ENCODE measurements at regions of chr10 and their contacts with region 1.

Region 1: GRCh38 chr10:13371897-13372470 is 23.9 kb upstream of the SEPHS1 start:
- DNase-seq: peak; percentile 56
- H3K4me3 ChIP-seq: no peak overlapping the region
- H3K27ac ChIP-seq: no peak overlapping the region
- H3K27me3 ChIP-seq: peaks cover 6% of the 10 kb centered on the region
- CTCF ChIP-seq: peak; percentile 97

Region 2: GRCh38 chr10:13056456-13057077 is 315.4 kb before region 1 on chr10:
- CTCF ChIA-PET with region 1: no interaction called
- POLR2A ChIA-PET with region 1: no interaction called
- DNase-seq: peak; percentile 4
- H3K4me3 ChIP-seq: no peak overlapping the region
- H3K27ac ChIP-seq: no peak overlapping the region
- H3K27me3 ChIP-seq: peaks cover 5% of the 10 kb centered on the region
- CTCF ChIP-seq: peak; percentile 64

Region 3: DNA sequence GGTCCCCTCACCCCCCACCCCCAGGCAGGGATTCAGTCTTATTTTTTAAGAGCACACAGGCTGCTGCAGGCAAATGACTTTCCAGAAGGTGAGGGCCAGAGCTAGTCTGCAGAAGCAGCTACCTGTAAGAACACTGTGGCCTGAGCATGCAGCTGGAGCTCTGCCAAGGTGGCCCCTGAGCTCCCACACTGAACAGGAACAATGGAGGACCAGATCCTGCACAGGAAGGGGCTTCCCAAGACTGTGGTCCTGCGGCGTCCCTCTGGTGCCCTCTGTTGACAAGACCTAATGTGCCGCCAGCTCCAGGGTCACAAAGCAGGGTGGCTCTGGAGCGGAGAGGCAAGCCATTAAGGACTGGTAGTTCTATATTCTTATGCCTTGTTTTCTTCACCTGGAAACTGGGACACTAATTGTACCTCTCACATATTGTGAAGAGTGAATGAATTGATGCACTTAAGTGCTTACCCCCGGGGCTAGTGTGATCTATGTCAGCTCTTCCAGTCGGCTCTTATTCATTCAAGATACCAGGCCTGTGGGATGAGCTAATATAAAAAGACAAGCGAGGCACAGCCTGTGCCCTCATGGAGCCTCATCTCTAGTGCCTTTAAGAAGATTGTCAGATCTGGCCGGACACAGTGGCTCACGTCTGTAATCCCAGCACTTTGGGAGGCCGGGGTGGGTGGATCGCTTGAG is 164.8 kb after region 1 on chr10:
- CTCF ChIA-PET with region 1: interaction called, 24 read pairs
- POLR2A ChIA-PET with region 1: no interaction called
- DNase-seq: no peak
- H3K4me3 ChIP-seq: no peak overlapping the region
- H3K27ac ChIP-seq: no peak overlapping the region
- H3K27me3 ChIP-seq: peaks cover 23% of the 10 kb centered on the region
- CTCF ChIP-seq: peak; percentile 55

Region 4: DNA sequence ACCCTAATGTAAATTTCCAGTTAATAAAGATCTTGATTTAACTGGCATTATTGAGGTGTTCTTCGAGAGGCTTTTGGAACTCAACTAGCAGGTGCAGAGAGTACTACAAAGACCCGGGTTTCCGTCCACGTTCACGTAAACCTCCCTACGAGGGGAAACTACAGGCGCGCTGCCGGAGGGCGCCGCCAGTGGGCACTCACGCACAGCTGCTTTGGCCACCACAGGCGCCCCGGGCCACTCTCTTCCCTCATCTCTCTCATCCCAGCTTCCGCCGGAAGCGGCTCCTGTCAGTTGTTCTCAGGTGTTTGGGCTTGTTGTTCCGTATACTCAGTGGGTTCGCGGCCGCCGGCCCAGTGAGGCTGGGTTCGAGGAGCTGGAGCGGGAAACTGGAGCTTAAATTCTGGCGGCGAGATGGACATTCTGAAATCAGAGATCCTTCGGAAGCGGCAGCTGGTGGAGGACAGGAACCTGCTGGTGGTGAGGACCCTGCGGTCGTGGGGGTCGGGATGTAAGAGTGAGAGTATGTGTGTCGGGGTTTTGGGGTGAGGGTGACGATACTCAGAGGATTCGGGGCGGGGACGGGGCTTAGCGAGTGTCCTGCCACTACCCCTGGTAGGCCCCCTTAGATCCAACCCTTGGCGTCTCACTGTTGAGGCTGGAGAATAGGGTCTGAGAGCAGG is 214.8 kb after region 1 on chr10 and contains the start of gene PRPF18:
- CTCF ChIA-PET with region 1: interaction called, 14 read pairs
- POLR2A ChIA-PET with region 1: no interaction called
- DNase-seq: peak; percentile 76
- H3K4me3 ChIP-seq: peak within 1 kb of the TSS; percentile 100
- H3K27ac ChIP-seq: no peak within 1 kb of the TSS
- H3K27me3 ChIP-seq: peaks cover 7% of the 10 kb centered on the region
- CTCF ChIP-seq: peak; percentile 99
- polyA plus RNA-seq, gene PRPF18: 19.3 and 25.4 TPM in 2 replicates

Measured in AG04450 (cell line).